ENCODE measurements at regions of chr3 and their contacts with region 1.

Region 1: GRCh38 chr3:153221748-153222162 is 59.7 kb downstream of the RAP2B start:
- DNase-seq: peak; percentile 88
- H3K4me3 Mint-ChIP-seq: peak overlapping the region; percentile 44
- H3K27ac Mint-ChIP-seq: peak overlapping the region; percentile 87
- H3K4me1 Mint-ChIP-seq: peaks cover 54% of the 10 kb centered on the region
- H3K27me3 Mint-ChIP-seq: no peaks in the 10 kb centered on the region

Region 2: DNA sequence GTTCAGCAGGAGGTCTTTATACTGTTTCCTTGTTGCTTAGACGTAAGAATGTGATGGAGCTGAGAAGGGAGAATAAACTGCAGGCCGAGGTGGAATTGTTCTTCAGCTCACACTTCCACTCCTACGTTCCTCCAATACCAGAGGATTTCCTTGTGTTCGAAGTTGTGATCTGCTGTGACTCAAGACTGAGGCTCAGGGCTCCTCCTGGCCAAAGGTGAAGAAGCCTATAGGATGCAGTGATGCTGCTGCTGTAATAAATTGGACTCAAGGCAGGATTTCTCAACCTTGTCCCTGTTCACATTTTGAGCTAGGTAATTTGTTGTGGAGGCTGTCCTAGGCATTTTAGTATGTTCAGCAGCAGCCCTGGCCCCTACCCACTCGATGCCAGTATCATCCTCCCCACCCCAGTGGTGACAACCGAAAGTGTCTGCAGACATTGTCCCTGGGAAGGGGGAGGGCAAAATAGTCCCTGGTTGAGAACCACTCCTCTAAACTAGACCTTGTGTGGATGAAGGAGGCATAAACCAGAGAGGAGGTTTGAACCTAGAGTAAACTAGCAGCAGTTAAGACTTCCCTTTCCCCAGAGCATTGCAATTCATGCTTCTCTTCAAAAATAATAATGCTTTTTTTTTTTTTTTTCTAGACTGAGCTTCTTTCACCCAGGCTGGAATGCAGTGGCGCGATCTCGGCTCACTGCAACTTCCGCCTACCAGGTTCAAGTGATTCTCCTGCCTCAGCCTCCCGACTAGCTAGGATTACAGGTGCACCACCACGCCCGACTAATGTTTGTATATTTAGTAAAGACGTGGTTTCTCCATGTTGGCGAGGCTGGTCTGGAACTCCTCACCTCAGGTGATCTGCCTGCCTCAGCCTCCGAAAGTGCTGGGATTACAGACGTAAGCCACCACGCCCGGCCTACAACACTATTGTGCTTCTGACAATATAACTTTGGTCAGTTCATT is 48.7 kb before region 1 on chr3:
- CTCF ChIA-PET with region 1: no interaction called
- POLR2A ChIA-PET with region 1: interaction called, 12 read pairs
- DNase-seq: no peak
- H3K4me3 Mint-ChIP-seq: no peak overlapping the region
- H3K27ac Mint-ChIP-seq: no peak overlapping the region
- H3K4me1 Mint-ChIP-seq: peaks cover 28% of the 10 kb centered on the region
- H3K27me3 Mint-ChIP-seq: no peaks in the 10 kb centered on the region

Region 3: GRCh38 chr3:153192327-153192726 is 29.4 kb before region 1 on chr3:
- CTCF ChIA-PET with region 1: no interaction called
- POLR2A ChIA-PET with region 1: no interaction called
- DNase-seq: no peak
- H3K4me3 Mint-ChIP-seq: no peak overlapping the region
- H3K27ac Mint-ChIP-seq: no peak overlapping the region
- H3K4me1 Mint-ChIP-seq: no peaks in the 10 kb centered on the region
- H3K27me3 Mint-ChIP-seq: no peaks in the 10 kb centered on the region

Region 4: DNA sequence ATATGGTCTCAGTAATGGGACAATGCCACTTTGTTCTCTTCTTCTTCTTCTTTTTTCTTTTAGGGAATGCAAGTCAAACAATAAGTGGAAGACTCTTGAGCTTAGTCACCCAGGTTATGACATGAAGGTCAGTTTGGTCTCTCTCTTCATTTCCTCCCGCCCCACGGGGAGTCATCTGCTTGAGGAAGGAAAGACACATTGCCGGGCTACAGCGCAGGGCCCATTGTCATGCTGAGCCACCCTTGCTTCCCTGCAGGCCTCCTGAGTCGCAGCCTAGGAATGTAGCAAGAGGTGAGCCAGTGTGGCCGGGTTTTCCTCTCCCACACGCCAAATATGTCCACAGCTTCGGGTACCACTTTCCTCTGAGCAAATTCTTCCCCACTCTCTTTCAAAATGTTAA is 12.2 kb before region 1 on chr3:
- CTCF ChIA-PET with region 1: interaction called, 38 read pairs
- POLR2A ChIA-PET with region 1: interaction called, 8 read pairs
- DNase-seq: no peak
- H3K4me3 Mint-ChIP-seq: no peak overlapping the region
- H3K27ac Mint-ChIP-seq: no peak overlapping the region
- H3K4me1 Mint-ChIP-seq: peaks cover 23% of the 10 kb centered on the region
- H3K27me3 Mint-ChIP-seq: no peaks in the 10 kb centered on the region

Region 5: DNA sequence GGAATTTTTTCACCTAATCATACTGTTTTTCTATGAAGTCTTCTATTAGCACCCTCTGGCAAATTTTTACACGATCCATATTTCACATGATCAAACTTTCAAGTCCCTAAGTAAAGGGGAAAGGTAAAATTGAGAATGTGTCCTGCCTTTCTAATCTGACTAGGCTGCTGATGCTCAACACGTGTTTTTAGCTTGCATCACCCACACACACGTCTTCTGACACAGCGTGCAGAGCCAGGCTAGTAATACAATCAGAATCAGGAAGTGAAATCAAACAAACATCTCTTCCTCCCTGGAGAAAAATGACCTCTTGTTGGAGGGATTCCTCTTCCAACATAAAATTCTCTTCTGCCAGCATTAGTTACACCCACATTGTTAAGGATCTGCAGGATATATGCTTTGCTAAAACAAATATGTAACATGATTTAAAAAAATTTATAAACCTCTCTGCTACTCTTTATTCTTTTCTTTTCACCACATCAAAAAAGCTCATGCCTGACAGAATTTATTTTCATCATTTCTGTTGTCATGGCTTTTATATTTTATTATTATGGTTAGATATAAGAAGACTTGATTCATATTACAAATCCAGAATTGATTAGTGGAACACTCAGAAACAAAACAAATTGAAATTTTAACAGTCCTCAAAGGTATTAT is 62.7 kb after region 1 on chr3:
- CTCF ChIA-PET with region 1: interaction called, 6 read pairs
- POLR2A ChIA-PET with region 1: interaction called, 21 read pairs
- DNase-seq: peak; percentile 45
- H3K4me3 Mint-ChIP-seq: no peak overlapping the region
- H3K27ac Mint-ChIP-seq: peak overlapping the region; percentile 67
- H3K4me1 Mint-ChIP-seq: peaks cover 40% of the 10 kb centered on the region
- H3K27me3 Mint-ChIP-seq: no peaks in the 10 kb centered on the region

Region 6: DNA sequence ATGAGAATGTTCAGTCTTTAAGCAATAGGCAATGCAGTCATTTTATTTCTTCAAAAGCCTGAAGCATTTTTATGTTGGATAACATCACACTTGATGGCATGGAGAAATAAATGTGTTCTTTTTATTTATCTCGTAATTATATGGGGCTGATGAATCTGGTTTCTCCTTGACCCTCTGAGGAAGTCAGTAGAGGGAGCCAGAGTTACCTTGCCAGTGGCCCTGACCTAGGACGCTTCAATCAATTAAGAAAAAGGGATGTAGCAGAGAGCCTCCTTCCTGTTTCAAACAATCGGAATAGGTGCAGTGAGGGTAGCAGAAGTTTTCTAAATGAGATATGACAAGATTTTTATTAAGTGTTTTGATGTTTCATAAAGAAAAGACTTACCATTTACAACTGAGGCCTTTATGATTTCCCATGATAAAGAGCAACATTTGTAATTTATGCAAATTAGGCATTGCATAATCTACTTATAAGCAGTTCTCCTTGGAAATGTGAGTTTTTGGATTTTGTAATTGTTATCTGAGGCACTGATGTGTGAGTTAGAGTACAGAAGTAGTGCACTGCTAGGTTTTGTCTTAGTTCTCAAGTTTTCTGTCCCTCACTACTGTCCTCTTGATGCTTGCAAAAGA is 69.4 kb after region 1 on chr3:
- CTCF ChIA-PET with region 1: interaction called, 16 read pairs
- POLR2A ChIA-PET with region 1: interaction called, 21 read pairs
- DNase-seq: no peak
- H3K4me3 Mint-ChIP-seq: no peak overlapping the region
- H3K27ac Mint-ChIP-seq: no peak overlapping the region
- H3K4me1 Mint-ChIP-seq: peaks cover 42% of the 10 kb centered on the region
- H3K27me3 Mint-ChIP-seq: no peaks in the 10 kb centered on the region

Region 7: GRCh38 chr3:153591561-153592245 is 369.9 kb after region 1 on chr3:
- CTCF ChIA-PET with region 1: no interaction called
- POLR2A ChIA-PET with region 1: no interaction called
- DNase-seq: no peak
- H3K4me3 Mint-ChIP-seq: no peak overlapping the region
- H3K27ac Mint-ChIP-seq: no peak overlapping the region
- H3K4me1 Mint-ChIP-seq: peaks cover 5% of the 10 kb centered on the region
- H3K27me3 Mint-ChIP-seq: peaks cover 1% of the 10 kb centered on the region

Measured in activated CD4-positive, alpha-beta memory T cell treated with anti-CD3 and anti-CD28 coated beads, Interleukin-2, amount 10 ng/mL, durations not matched to agents 7 days and 5 days (primary cell).